Activated CD8-positive, alpha-beta T cell treated with anti-CD3 and anti-CD28 coated beads for 36 hours (primary cell): ENCODE measurements at regions of chr20 and their contacts with region 1.

Region 1: GRCh38 chr20:33666293-33667244 is at the start of gene ACTL10:
- DNase-seq: peak; percentile 93
- ATAC-seq: peak; percentile 70
- H3K4me3 Mint-ChIP-seq: peak within 1 kb of the TSS; percentile 83
- H3K27ac Mint-ChIP-seq: peak within 1 kb of the TSS; percentile 90
- H3K4me1 Mint-ChIP-seq: peaks cover 37% of the 10 kb centered on the region
- H3K27me3 Mint-ChIP-seq: no peaks in the 10 kb centered on the region
- CTCF ChIP-seq: no peak
- total RNA-seq, gene ACTL10: 2.4 TPM

Region 2: GRCh38 chr20:33450867-33451266 is 215.7 kb before region 1 on chr20:
- CTCF ChIA-PET with region 1: interaction called, 30 read pairs
- POLR2A ChIA-PET with region 1: interaction called, 4 read pairs
- intact Hi-C with region 1: loop called (anchors 5 kb)
- DNase-seq: no peak
- ATAC-seq: no peak
- H3K4me3 Mint-ChIP-seq: no peak overlapping the region
- H3K27ac Mint-ChIP-seq: no peak overlapping the region
- H3K4me1 Mint-ChIP-seq: no peaks in the 10 kb centered on the region
- H3K27me3 Mint-ChIP-seq: no peaks in the 10 kb centered on the region
- CTCF ChIP-seq: no peak

Region 3: DNA sequence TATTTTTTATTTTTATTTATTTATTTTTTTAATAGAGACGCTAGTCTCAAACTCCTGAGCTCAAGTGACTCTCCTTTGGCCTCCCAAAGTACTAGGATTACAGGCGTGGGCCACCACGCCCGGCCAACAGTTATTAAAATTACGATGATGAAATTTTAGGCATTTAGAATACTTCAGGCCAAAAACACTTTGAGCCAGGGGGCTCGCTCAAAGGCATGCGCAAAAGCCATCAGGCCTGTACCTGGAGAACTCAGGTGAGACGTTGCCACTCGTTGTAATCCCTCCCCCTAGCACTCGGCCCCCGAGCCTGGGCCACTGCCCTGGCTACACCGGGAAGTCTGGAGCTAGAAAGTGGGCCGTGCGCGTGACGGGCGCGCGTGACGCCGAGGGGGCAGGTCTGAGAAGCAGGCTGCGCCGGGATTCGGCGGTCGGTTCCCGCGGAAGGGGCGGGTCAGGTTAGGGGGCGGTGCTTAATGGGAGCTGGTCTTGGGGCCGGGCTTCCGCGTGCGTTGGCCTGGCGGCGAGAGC is 177.0 kb before region 1 on chr20:
- CTCF ChIA-PET with region 1: interaction called, 10 read pairs
- POLR2A ChIA-PET with region 1: interaction called, 4 read pairs
- intact Hi-C with region 1: no loop called
- DNase-seq: peak; percentile 99
- ATAC-seq: peak; percentile 99
- H3K4me3 Mint-ChIP-seq: peak overlapping the region; percentile 82
- H3K27ac Mint-ChIP-seq: peak overlapping the region; percentile 86
- H3K4me1 Mint-ChIP-seq: peaks cover 11% of the 10 kb centered on the region
- H3K27me3 Mint-ChIP-seq: no peaks in the 10 kb centered on the region
- CTCF ChIP-seq: no peak

Region 4: GRCh38 chr20:33606118-33606771 is 60.3 kb before region 1 on chr20:
- CTCF ChIA-PET with region 1: no interaction called
- POLR2A ChIA-PET with region 1: no interaction called
- intact Hi-C with region 1: no loop called
- DNase-seq: no peak
- ATAC-seq: no peak
- H3K4me3 Mint-ChIP-seq: no peak overlapping the region
- H3K27ac Mint-ChIP-seq: no peak overlapping the region
- H3K4me1 Mint-ChIP-seq: peaks cover 14% of the 10 kb centered on the region
- H3K27me3 Mint-ChIP-seq: no peaks in the 10 kb centered on the region
- CTCF ChIP-seq: no peak

Region 5: DNA sequence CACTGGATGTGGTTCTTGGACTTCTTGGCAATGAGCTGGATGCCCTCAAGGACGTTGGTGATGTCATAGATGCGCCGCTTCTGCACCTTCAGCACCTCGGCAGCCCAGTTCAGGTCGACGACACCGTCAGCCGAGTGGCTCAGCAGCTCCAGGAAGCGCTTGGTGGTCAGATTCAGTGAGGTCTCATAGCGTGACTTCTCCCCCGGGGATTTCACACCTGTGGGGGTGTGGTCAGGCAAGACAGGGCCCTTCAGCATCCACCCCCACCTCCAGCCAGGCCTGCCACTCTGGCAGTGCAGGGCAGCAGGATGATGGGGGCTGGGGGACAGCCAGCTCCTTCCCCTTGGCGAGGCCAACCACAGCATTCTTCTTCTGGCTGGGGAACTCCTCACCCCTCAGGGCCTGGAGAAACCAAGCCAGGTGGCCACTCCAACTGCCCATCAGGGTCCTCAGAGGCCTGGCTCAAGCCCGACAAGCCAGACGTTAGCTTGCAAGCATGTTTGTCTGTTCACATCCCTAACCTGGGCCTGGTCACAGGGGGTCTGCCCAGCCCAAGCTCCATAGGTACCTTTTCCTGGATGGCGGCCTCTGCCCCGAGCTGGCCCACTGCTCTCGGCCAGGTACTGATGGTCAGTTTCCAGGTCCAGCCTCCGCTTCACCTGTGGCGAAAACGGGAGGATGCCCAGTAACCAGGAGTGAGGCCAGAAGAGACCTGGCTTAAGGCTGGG is 13.4 kb after region 1 on chr20:
- CTCF ChIA-PET with region 1: interaction called, 71 read pairs
- POLR2A ChIA-PET with region 1: interaction called, 262 read pairs
- intact Hi-C with region 1: no loop called
- DNase-seq: peak; percentile 73
- ATAC-seq: peak; percentile 57
- H3K4me3 Mint-ChIP-seq: no peak overlapping the region
- H3K27ac Mint-ChIP-seq: peak overlapping the region; percentile 59
- H3K4me1 Mint-ChIP-seq: peaks cover 68% of the 10 kb centered on the region
- H3K27me3 Mint-ChIP-seq: no peaks in the 10 kb centered on the region
- CTCF ChIP-seq: no peak

Region 6: GRCh38 chr20:33731693-33732165 is 65.2 kb after region 1 on chr20 and contains the start of gene ZNF341:
- CTCF ChIA-PET with region 1: interaction called, 24 read pairs
- POLR2A ChIA-PET with region 1: interaction called, 9 read pairs
- intact Hi-C with region 1: loop called (anchors 5 kb)
- DNase-seq: peak; percentile 90
- ATAC-seq: peak; percentile 89
- H3K4me3 Mint-ChIP-seq: peak within 1 kb of the TSS; percentile 79
- H3K27ac Mint-ChIP-seq: peak within 1 kb of the TSS; percentile 84
- H3K4me1 Mint-ChIP-seq: peaks cover 21% of the 10 kb centered on the region
- H3K27me3 Mint-ChIP-seq: no peaks in the 10 kb centered on the region
- CTCF ChIP-seq: peak; percentile 78
- total RNA-seq, gene ZNF341: 4.3 to 5.0 TPM